BJ (cell line): ENCODE measurements at regions of chr11 and their contacts with region 1.

Region 1: DNA sequence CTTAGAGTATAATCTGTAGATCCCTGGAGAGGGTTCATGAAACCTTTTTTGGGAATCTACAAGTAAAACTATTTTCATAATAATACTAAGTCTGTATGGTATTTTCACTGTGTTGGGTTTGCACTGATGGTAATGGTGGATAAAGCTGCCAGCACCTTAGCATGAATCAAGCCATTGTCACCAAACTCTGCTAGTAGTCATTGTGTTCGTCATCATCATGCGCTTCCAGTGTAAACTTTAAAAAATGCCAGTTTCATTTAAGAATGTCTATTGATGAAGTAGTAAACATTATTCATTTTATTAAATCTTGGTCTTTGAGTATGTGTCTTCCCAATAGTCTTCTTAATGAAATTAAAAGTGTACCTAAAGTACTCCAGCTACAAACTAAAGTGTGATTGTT is 15.0 kb downstream of the ALKBH3 start:
- DNase-seq: no peak
- H3K4me3 ChIP-seq: no peak overlapping the region
- H3K27me3 ChIP-seq: no peaks in the 10 kb centered on the region
- CTCF ChIP-seq: no peak

Region 2: DNA sequence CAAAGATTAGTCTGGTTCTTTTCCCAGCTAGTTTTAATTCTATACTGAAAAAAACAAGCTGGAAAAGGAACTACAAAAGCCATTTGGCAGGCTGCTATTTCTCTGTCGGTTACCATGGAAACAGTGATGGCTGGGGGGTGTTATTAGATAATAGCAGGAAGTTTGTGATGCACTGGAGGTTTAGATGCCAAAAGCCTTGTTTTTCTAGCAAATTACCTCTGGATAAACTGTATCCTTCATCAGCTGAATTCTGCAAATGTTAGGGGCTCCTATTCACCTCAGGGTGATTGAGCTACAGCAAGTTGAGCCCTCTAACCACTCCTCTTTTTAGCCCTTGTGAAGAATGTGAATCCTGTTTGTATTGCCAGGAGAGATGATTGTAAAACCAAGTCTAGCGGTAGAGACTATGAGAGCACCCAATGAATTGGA is 10.2 kb after region 1 on chr11:
- CTCF ChIA-PET with region 1: interaction called, 10 read pairs
- POLR2A ChIA-PET with region 1: no interaction called
- DNase-seq: no peak
- H3K4me3 ChIP-seq: no peak overlapping the region
- H3K27me3 ChIP-seq: no peaks in the 10 kb centered on the region
- CTCF ChIP-seq: no peak

Region 3: DNA sequence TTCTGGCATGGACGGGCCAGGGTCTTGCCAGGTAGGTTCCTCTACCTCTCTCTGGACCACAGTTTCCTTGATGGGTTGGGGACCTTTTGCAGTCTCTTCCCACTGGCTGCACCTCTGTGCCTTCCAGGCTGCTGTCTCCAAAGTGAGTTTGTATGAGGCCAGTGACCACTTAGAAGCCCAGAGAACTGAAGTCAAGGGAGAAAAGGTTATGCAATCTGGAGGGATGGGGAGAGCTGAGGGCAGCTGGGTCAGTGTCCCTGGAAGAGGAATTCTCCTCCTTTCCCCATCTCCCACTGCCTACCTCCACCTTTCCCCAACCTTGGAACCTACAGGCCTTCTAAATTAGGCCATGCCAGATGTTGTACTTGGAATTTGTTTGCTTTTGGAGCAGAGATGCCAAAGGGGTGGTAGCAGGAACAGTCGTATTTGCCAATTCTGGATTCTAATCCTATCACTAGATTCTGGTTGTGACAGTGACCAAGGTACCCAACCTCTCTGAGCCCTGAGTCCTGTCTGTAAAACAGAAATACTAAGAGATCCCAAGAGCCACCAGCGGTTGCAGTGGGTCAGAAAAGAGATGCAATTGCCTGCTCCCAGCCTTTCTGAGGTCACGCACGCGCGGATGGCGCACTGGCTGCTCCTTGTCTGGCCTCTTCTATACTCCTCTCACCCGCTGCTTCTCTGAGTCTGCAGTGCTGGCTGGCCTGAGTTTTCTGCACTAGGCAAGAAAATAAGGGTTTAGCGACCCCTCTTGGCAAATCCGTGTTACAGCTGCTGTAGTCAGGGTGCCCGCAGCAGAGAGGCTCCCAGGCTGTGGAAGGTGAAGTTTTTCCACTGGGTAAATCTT is 141.4 kb after region 1 on chr11:
- CTCF ChIA-PET with region 1: interaction called, 162 read pairs
- POLR2A ChIA-PET with region 1: no interaction called
- DNase-seq: no peak
- H3K4me3 ChIP-seq: no peak overlapping the region
- H3K27me3 ChIP-seq: peaks cover 1% of the 10 kb centered on the region
- CTCF ChIP-seq: peak; percentile 89

Region 4: DNA sequence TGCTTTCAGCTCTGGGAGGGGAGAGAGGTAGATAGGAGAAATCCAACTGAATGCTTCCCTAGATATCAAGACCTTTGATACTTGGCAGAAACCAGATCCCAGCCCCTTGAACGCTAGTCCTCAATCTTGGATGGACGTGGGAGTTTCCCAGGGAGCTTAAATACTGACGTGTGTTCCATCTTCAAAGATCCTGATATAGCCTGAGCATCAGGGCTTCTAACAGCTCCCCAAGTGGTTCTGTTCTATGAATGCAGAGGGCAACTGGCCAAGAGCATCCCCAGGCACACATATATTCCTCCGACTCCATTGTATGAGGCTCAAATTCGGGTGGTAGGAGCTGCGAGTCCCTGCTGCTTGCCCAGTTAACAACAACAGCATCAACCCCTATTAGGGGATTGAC is 161.7 kb after region 1 on chr11:
- CTCF ChIA-PET with region 1: interaction called, 11 read pairs
- POLR2A ChIA-PET with region 1: no interaction called
- DNase-seq: no peak
- H3K4me3 ChIP-seq: no peak overlapping the region
- H3K27me3 ChIP-seq: peaks cover 8% of the 10 kb centered on the region; the same call in 1 of the 2 replicates
- CTCF ChIP-seq: no peak